ENCODE measurements at regions of chr11 and their contacts with region 1.

Region 1: DNA sequence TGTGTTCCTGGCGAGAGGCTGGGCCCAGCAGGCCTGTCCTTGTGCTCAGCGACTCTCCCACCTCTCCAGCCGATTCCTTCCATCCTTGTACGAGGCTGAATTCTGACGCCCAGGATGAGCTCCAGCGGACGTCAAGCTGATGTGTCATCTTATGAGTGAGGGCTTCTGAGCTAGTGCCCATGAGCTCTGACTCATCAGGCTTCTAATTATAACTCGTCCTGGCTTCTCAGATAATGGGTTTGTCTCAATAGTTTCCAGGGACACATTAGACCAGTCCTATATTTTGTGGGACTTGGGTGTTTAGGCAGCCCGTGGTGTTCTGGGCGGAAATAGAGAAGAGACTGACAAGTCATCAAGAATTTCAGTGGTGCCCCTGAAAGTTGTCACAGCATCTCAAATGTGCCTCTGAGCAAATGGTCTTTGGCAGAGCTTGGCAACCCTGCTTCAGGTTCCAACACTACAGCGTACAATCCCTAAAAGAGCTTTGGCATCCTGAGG is 108.2 kb upstream of the CD44 start:
- DNase-seq: peak; percentile 97
- H3K4me3 Mint-ChIP-seq: no peak overlapping the region
- H3K27ac Mint-ChIP-seq: peak overlapping the region; percentile 77
- H3K4me1 Mint-ChIP-seq: peaks cover 30% of the 10 kb centered on the region
- H3K27me3 Mint-ChIP-seq: no peaks in the 10 kb centered on the region
- CTCF ChIP-seq: no peak

Region 2: GRCh38 chr11:35087648-35088047 is 56.9 kb after region 1 on chr11:
- CTCF ChIA-PET with region 1: no interaction called
- POLR2A ChIA-PET with region 1: interaction called, 15 read pairs
- intact Hi-C with region 1: no loop called
- DNase-seq: no peak
- H3K4me3 Mint-ChIP-seq: no peak overlapping the region
- H3K27ac Mint-ChIP-seq: no peak overlapping the region
- H3K4me1 Mint-ChIP-seq: peaks cover 40% of the 10 kb centered on the region
- H3K27me3 Mint-ChIP-seq: no peaks in the 10 kb centered on the region
- CTCF ChIP-seq: no peak

Region 3: GRCh38 chr11:35111161-35112055 is 80.6 kb after region 1 on chr11:
- CTCF ChIA-PET with region 1: no interaction called
- POLR2A ChIA-PET with region 1: interaction called, 25 read pairs
- intact Hi-C with region 1: no loop called
- DNase-seq: peak; percentile 85
- H3K4me3 Mint-ChIP-seq: no peak overlapping the region
- H3K27ac Mint-ChIP-seq: peak overlapping the region; percentile 80
- H3K4me1 Mint-ChIP-seq: peaks cover 40% of the 10 kb centered on the region
- H3K27me3 Mint-ChIP-seq: no peaks in the 10 kb centered on the region
- CTCF ChIP-seq: no peak

Region 4: GRCh38 chr11:35116762-35117640 is 86.2 kb after region 1 on chr11:
- CTCF ChIA-PET with region 1: no interaction called
- POLR2A ChIA-PET with region 1: interaction called, 25 read pairs
- intact Hi-C with region 1: no loop called
- DNase-seq: peak; percentile 9
- H3K4me3 Mint-ChIP-seq: no peak overlapping the region
- H3K27ac Mint-ChIP-seq: peak overlapping the region; percentile 31
- H3K4me1 Mint-ChIP-seq: peaks cover 23% of the 10 kb centered on the region
- H3K27me3 Mint-ChIP-seq: no peaks in the 10 kb centered on the region
- CTCF ChIP-seq: no peak

Region 5: DNA sequence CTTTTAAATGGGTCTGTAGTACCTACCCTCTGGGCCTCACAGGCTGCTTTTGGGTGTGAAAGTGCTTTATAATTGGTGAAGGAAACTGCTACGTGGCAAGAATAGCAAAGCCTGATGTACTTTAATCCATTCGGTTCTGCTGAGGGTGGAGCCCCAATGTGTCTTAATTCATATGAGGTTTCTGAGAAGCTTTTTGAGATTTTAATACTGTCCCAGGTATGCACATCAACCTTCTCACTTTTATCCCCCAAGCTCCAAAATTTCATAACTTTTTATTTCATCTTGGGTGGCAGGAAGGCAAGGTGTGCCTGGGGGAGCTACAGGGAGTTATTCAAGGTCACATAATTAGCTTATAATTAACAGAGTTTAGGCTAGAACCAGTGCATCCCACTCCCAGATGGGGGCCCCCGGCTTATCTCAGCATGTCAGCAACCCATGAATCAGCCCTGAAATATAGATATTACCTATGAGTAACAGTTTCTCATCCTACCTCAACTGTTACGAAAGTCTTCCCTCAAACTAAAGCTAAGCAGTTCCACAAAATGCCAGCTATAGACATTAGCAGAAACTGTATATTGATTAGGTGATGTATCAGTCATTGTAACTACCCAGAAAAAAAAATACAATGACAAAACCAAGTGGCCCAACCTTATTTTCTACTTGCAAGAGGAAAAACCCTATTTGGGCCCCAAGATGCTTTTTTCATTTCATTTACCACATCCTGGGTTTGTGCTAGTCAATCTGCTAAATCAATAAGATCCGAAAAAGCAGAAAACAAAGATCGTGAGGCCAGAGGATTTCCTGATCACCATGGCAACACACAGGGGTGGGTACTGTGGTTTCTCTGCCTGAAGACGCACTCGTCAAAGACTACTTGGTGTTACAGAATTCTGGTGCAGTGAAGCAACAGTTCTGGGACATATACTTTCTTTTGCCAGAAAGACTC is 134.9 kb after region 1 on chr11:
- CTCF ChIA-PET with region 1: interaction called, 3 read pairs
- POLR2A ChIA-PET with region 1: interaction called, 18 read pairs
- intact Hi-C with region 1: no loop called
- DNase-seq: peak; percentile 65
- H3K4me3 Mint-ChIP-seq: peak overlapping the region; percentile 54
- H3K27ac Mint-ChIP-seq: peak overlapping the region; percentile 94
- H3K4me1 Mint-ChIP-seq: peaks cover 46% of the 10 kb centered on the region
- H3K27me3 Mint-ChIP-seq: no peaks in the 10 kb centered on the region
- CTCF ChIP-seq: no peak

Measured in MCF 10A (cell line).